Cardiac septum (tissue), 1 donor: ENCODE measurements at regions of chr6 and their contacts with region 1.

Region 1: DNA sequence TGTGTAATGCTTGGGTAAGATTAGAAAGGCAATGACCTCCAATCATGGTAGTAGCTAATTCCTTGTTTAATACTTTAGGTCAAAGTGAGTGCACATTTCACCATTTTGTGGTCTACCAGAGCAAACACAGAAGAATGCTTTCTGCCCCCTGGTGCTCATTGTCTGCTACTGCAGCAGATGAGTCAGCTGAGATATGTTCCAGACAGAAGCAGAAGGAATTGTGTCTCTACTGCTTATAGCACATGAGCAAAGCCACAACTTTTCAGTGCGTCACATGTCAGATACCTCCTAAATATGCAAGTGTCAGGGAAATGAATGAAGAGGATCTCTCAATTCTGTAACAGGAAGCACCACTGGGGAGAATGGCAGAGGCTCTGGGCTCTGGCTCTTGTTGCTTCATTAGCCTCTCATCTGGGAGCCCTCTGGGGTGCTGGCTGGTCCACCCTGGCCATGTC is 308.9 kb downstream of the ALDH8A1 start:
- DNase-seq: peak; percentile 86

Region 2: GRCh38 chr6:134446218-134446848 is 194.7 kb before region 1 on chr6:
- intact Hi-C with region 1: loop called (anchors 10 kb)
- DNase-seq: no peak

Region 3: GRCh38 chr6:134502614-134503549 is 138.1 kb before region 1 on chr6:
- intact Hi-C with region 1: no loop called
- DNase-seq: no peak

Region 4: DNA sequence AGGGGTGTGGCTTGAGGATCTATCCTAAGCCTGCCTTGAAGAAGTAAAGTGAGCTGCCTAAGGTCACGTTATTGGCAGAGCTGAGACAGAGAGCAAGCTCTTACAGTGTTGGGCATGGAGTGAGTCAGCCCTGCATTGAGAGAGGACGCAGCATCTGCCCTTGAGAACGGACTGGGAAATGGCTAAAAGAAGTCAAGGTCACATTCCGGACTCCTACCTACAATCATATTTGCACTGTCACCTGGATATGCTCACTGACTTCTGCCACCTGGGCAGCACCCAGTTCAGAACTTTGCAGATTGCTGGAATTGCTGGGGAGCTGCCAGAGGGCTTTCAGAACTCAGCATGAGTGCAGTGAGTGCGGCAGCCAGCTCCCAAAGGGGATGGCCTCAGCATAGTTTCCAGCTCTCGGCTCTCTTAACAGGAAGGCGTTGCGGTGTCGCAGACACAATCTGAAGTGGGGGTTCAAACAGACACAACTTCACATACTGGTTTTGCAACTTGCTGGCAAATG is 123.8 kb before region 1 on chr6:
- intact Hi-C with region 1: loop called (anchors 10 kb)
- DNase-seq: peak; percentile 86

Region 5: DNA sequence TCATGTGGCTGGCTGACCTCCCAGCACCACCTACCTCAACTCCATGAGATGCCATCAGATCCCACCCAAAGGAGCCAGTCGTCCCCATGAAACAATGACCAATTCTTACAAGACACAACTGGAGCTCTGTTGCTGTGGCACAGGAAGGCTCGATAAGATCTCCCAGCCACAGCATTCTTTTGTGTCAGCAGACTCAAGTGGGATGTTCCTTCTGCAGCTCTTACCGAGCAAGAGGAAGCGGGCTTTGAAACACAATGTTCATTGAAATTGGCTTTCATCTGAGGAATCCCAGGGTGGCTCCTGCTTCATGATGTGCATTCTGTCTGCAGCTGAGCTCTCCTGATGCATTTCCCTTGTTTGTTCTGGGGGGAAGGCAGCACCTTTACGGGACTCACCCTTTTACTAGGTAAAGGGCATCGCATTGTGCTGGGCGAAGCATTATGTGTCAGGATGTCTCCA is 101.1 kb before region 1 on chr6:
- intact Hi-C with region 1: loop called (anchors 5 kb)
- DNase-seq: peak; percentile 76

Region 6: DNA sequence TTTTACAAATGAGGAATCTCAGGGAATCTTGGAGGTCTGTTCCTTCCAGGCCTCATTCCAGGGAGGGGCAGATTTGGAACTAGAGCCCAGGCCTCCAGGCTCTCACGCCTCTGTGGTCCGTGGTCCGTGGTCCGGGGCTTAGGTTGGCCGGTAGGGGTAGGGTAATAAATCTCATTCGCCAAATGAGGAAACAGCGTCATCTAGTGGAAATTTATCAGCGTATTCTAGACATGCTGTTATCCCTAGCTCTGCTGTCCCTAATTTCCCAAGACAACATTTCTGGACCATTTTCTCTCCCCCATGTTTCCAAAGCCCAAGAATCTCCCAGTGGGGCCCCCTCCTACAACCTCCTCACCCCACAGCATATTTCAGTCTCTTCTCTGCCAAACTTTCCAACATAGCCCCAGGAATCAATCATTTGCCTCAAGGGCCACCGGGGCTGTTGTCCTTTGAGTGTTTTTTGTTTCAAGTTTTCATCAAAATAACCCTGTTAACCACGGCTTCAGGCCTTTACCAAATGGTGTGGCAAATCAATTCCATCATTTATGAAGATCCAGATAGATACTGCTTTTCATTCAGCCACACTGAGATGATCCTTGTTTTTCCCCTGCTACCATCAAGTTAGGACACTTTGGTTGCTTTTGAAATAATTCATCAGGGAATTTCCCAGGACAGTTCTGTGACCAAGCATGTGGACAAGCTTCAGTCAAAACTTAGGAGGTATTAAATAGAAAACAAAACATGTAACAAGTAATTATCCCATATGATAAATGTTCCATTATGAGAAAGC is 182.1 kb after region 1 on chr6:
- intact Hi-C with region 1: loop called (anchors 1 kb)
- DNase-seq: no peak

Region 7: DNA sequence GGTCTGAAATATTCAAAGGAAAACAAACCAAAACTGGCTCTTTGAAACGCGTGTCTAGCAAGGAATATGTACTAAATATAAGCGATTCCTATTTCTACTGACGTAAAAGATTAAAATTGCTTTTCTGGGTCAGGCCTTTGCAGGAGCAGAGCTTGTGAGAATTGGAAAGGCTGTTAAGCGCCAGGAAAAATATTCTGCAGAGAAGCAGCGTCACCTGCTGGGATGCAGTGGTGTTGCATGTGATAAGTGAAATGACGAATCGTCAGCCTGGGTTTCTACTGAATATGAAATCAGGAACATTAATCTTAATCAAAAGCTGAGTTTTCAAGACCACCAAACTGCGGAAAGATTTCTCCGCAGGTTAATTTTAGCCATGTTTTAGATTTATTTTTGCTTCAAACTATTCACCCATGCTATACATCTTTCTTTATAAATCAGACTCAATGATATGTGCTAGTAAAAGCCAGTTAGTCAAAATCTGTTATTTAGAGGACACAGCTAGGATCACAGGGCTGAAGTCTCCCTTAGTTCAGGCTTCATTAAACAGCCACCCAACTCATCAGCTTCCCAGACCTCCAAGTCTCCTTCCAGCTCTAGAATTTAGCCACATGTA is 241.5 kb after region 1 on chr6:
- intact Hi-C with region 1: loop called (anchors 10 kb)
- DNase-seq: no peak